ENCODE measurements at regions of chr7 and their contacts with region 1.

Region 1: DNA sequence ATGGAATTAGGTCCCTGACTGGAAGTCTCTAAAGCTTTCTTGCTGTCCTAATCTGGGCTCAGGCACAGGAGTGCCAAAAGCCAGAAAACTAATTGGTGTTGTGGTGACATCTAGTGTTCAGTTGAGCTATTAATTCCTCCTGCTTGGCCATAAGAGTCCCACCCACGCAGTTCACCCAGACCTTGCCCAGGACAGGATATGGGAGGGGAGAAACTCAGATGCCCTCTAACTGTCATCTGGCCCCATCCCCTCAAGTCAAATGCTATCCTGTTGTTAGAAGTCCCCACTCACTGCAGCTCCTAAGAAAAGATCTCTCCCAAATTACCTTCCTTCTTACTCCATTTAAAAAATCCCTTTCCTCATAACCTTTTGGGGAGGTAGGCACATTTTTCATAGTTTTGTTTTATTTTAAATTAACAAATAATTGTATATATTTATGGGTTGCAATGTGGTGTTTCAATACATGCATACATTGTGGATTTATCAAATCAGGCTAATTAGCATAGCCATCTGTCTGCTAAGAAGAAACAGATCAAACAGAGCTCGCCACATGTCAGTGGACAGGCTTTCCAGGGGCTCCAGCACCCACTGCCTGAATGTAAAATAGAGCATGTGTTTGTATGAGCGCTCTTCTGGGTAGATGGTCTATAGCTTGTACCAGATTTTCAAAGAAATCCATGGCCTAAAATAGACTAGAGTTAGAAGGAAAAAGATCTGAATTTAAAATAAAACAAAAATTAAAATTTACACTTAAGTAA is 84.0 kb downstream of the GSAP start:
- DNase-seq: peak; percentile 93
- H3K4me3 ChIP-seq: no peak overlapping the region
- H3K27ac ChIP-seq: no peak overlapping the region
- H3K4me1 ChIP-seq: peaks cover 47% of the 10 kb centered on the region
- H3K27me3 ChIP-seq: no peaks in the 10 kb centered on the region
- CTCF ChIP-seq: peak; percentile 54 to 56
- POLR2A ChIP-seq: no peak

Region 2: GRCh38 chr7:76515999-76516443 is 816.1 kb before region 1 on chr7:
- CTCF ChIA-PET with region 1: no interaction called
- POLR2A ChIA-PET with region 1: no interaction called
- dilution Hi-C with region 1: no loop called
- intact Hi-C with region 1: loop called (anchors 5 kb)
- DNase-seq: no peak
- H3K4me3 ChIP-seq: no peak overlapping the region
- H3K27ac ChIP-seq: no peak overlapping the region
- H3K4me1 ChIP-seq: peaks cover 2% of the 10 kb centered on the region
- H3K27me3 ChIP-seq: no peaks in the 10 kb centered on the region
- CTCF ChIP-seq: peak in 1 of 2 donors; percentile 49
- POLR2A ChIP-seq: no peak

Region 3: GRCh38 chr7:77247206-77247850 is 84.8 kb before region 1 on chr7:
- CTCF ChIA-PET with region 1: interaction called, 103 read pairs
- POLR2A ChIA-PET with region 1: interaction called, 6 read pairs
- dilution Hi-C with region 1: no loop called
- intact Hi-C with region 1: loop called (anchors 1 kb)
- DNase-seq: peak; percentile 80
- H3K4me3 ChIP-seq: no peak overlapping the region
- H3K27ac ChIP-seq: no peak overlapping the region
- H3K4me1 ChIP-seq: peaks cover 4% of the 10 kb centered on the region
- H3K27me3 ChIP-seq: no peaks in the 10 kb centered on the region
- CTCF ChIP-seq: peak; percentile 65 to 69
- POLR2A ChIP-seq: no peak

Region 4: DNA sequence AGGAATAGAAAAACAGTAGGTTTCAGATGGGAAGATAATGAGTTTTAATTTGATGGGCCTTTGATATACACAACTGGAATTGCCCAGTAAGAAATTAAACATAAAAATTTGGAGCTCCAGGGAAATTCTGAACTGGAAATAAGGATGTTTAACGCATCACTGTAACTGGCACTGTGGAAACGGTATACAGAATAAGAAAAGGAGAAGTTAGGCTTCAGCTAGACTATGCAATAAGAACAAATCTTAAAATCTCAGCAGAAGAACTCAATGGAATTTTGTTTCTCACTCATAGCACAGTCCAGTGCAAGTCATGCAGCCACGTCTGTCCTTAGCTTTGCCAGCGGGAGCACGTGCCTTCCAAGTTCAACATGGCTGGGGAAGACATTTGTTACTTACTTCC is 79.6 kb before region 1 on chr7:
- CTCF ChIA-PET with region 1: interaction called, 103 read pairs
- POLR2A ChIA-PET with region 1: interaction called, 6 read pairs
- dilution Hi-C with region 1: no loop called
- intact Hi-C with region 1: loop called (anchors 1 kb)
- DNase-seq: no peak
- H3K4me3 ChIP-seq: no peak overlapping the region
- H3K27ac ChIP-seq: no peak overlapping the region
- H3K4me1 ChIP-seq: peaks cover 4% of the 10 kb centered on the region
- H3K27me3 ChIP-seq: no peaks in the 10 kb centered on the region
- CTCF ChIP-seq: no peak
- POLR2A ChIP-seq: no peak

Region 5: DNA sequence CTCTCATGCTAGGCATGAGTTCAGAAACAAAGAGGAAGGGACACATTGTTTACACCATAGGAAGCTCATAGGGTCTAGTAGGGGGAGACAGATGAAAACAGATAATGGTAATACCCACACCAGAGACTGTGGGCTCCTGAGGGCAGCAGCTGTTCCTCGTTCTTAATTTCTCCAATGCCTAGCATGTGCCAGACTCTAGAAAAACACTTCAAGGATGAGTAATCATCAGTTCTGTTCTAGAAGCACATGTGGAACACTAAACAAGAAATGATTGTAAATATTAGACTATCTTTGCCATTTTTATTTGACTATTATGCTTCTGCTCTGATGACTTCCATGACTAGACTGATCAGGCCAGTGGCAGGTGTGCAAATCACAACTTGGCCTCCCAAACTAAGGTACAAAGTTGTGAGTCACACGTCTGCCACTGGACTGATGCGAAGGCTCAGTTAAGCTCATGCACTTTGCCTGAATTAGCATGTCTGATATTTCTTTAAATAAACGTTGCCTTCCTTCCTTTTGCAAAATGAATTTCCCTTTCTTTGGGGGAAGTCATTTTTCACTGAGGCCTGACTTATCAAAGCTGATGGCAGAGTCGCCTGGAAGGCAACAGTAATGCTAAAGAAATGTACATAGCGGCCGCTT is 43.3 kb before region 1 on chr7:
- CTCF ChIA-PET with region 1: interaction called, 4 read pairs
- POLR2A ChIA-PET with region 1: interaction called, 3 read pairs
- dilution Hi-C with region 1: no loop called
- intact Hi-C with region 1: loop called (anchors 2 kb)
- DNase-seq: peak; percentile 81
- H3K4me3 ChIP-seq: no peak overlapping the region
- H3K27ac ChIP-seq: peak overlapping the region; percentile 1
- H3K4me1 ChIP-seq: peaks cover 18% of the 10 kb centered on the region
- H3K27me3 ChIP-seq: no peaks in the 10 kb centered on the region
- CTCF ChIP-seq: no peak
- POLR2A ChIP-seq: no peak

Region 6: GRCh38 chr7:77321300-77321699 is 10.8 kb before region 1 on chr7:
- CTCF ChIA-PET with region 1: interaction called, 16 read pairs
- POLR2A ChIA-PET with region 1: no interaction called
- dilution Hi-C with region 1: no loop called
- intact Hi-C with region 1: no loop called
- DNase-seq: no peak
- H3K4me3 ChIP-seq: no peak overlapping the region
- H3K27ac ChIP-seq: no peak overlapping the region
- H3K4me1 ChIP-seq: peaks cover 7% of the 10 kb centered on the region
- H3K27me3 ChIP-seq: no peaks in the 10 kb centered on the region
- CTCF ChIP-seq: no peak
- POLR2A ChIP-seq: no peak

Region 7: GRCh38 chr7:77348371-77348813 is 16.3 kb after region 1 on chr7:
- CTCF ChIA-PET with region 1: interaction called, 19 read pairs
- POLR2A ChIA-PET with region 1: no interaction called
- dilution Hi-C with region 1: no loop called
- intact Hi-C with region 1: no loop called
- DNase-seq: peak; percentile 91
- H3K4me3 ChIP-seq: no peak overlapping the region
- H3K27ac ChIP-seq: no peak overlapping the region
- H3K4me1 ChIP-seq: peaks cover 22% of the 10 kb centered on the region
- H3K27me3 ChIP-seq: no peaks in the 10 kb centered on the region
- CTCF ChIP-seq: no peak
- POLR2A ChIP-seq: no peak

Measured in endothelial cell of umbilical vein (primary cell).